Right lobe of liver (tissue), 6 donors: ENCODE measurements at regions of chr1 and their contacts with region 1.

Region 1: DNA sequence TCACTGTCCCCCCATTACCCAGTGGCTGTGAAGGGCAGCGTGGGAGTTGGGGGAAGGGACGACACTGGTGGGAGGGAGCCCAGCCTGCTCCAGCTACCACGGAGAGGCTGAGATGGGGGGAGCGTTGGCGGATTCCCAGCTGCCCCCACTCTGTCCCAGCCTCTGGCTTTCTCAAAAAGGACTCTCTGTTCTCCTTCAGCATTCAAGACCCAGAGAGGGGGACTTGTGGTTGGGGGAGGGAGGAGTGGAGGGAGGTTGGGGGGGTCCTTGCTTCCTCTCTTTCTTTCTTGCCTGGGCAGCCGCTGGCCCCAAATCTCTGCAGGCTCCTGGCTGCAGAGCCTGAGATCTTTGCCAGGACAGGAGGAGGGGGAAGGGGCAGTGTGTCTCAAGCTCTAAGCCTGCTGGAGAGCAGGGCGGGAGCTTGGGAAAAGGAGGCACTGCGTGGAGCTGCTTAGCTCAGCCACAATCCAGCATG is 2.2 kb downstream of the ATP1A2 start:
- DNase-seq: no peak
- ATAC-seq: no peak
- H3K4me3 ChIP-seq: no peak overlapping the region
- H3K27ac ChIP-seq: no peak overlapping the region
- H3K4me1 ChIP-seq: no peaks in the 10 kb centered on the region
- H3K27me3 ChIP-seq: no peaks in the 10 kb centered on the region
- CTCF ChIP-seq: no peak
- POLR2A ChIP-seq: no peak

Region 2: GRCh38 chr1:160022330-160023310 is 95.1 kb before region 1 on chr1:
- intact Hi-C with region 1: no loop called
- DNase-seq: no peak
- ATAC-seq: no peak
- H3K4me3 ChIP-seq: no peak overlapping the region
- H3K27ac ChIP-seq: no peak overlapping the region
- H3K4me1 ChIP-seq: peaks cover 0 to 7% (median 2%) of the 10 kb centered on the region in 4 donors
- H3K27me3 ChIP-seq: no peaks in the 10 kb centered on the region
- CTCF ChIP-seq: no peak
- POLR2A ChIP-seq: no peak

Region 3: DNA sequence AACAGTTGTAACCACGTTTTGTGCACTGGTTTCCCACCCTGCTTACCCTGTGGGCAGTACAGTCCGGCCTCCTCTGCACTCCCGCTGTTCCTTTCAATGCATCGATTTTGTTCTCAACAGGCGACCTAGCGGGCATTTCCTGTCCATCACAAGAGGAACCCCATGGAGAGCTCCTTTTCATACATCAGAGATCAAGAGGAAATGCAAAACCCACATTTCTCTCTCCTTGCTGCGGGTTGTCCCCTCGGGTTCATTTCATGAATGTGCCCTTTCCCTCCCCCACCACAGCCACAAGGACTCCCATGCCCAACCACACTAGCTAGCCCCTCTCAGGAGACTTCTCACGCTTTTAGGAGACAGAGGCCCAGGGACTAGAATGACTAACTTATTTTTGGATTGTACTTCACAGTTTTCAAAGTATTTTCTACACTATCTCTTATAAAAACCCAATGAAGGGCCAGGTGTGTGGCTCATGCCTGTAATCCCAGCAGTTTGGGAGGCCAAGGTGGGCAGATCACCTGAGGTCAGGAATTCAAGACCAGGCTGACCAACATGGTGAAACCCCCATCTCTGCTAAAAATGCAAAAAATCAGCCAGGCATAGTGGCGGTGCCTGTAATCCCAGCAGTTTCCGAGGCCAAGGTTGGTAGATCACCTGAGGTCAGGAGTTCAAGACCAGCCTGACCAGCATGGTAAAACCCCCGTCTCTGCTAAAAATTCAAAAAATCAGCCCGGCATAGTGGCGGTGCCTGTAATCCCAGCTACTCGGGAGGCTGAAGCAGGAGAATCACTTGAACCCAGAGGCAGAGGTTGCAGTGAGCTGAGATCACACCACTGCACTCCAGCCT is 52.0 kb after region 1 on chr1:
- intact Hi-C with region 1: loop called in 1 of 2 experiments (anchors 10 kb)
- DNase-seq: no peak
- ATAC-seq: no peak
- H3K4me3 ChIP-seq: no peak overlapping the region
- H3K27ac ChIP-seq: no peak overlapping the region
- H3K4me1 ChIP-seq: no peaks in the 10 kb centered on the region
- H3K27me3 ChIP-seq: no peaks in the 10 kb centered on the region
- CTCF ChIP-seq: no peak
- POLR2A ChIP-seq: no peak

Region 4: DNA sequence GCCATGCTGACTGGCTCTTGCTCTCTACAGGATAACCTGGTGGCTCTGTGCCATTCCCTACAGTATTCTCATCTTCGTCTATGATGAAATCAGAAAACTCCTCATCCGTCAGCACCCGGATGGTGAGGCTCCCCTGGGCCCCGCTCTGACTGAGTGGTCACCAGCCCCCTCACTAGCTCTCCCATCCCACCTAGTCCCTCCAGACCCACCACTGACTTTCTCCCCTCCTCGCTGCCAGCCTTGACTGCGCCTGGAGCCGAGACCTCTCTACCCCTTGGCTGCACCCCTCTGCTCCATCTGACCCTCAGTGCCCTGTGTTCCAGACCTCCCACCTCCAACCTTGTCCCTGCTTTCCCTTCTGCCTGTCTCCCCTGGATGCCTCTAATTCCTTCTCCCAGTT is 68.5 kb after region 1 on chr1:
- intact Hi-C with region 1: no loop called
- DNase-seq: no peak
- ATAC-seq: no peak
- H3K4me3 ChIP-seq: no peak overlapping the region
- H3K27ac ChIP-seq: no peak overlapping the region
- H3K4me1 ChIP-seq: no peaks in the 10 kb centered on the region
- H3K27me3 ChIP-seq: no peaks in the 10 kb centered on the region
- CTCF ChIP-seq: no peak
- POLR2A ChIP-seq: no peak